Posterior vena cava (tissue), 2 donors: ENCODE measurements at regions of chr15 and their contacts with region 1.

Region 1: GRCh38 chr15:91852741-91853510 is 582 bp upstream of the SLCO3A1 start:
- DNase-seq: peak; percentile 96

Region 2: DNA sequence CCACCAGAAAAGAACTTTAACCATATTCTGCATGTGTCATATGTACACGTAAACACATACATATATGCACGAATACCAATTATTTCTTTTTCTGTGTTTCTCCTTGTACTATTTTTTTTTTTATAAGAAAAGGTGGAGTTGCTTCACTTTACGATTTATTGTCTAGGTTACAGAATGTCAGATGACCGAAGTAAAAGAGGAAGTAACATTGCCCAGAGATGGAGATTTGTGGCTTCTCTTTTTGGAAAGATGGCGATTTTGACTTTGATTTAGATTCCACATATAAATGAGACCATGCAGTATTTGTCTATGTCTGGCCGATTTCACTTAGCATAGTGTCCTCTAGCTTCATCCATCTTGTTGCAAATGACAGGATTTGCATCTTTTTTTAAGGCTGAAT is 459.7 kb before region 1 on chr15:
- intact Hi-C with region 1: loop called in 1 of 2 experiments (anchors 2 kb)
- DNase-seq: no peak

Region 3: DNA sequence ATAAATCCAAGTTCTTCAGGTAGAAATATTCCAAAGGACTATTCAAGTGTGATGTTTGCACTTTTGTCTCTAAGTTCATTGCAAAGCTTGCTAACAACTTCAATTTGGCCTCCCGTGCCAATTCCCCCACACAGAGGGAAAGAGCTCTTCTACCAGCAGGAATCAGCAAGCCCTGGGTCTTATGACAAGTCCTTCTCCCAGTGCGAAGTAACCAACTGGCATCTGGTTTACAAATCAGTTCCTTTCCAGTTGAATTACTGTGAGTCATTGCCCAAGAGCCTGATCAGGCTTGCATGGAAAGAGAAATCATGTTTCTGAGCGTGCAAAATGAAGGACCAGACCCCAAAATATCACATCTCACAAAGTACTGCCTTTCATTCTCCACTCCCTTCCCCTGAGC is 62.1 kb before region 1 on chr15:
- intact Hi-C with region 1: no loop called
- DNase-seq: no peak

Region 4: GRCh38 chr15:91890614-91891013 is 37.7 kb after region 1 on chr15:
- intact Hi-C with region 1: no loop called
- DNase-seq: no peak

Region 5: DNA sequence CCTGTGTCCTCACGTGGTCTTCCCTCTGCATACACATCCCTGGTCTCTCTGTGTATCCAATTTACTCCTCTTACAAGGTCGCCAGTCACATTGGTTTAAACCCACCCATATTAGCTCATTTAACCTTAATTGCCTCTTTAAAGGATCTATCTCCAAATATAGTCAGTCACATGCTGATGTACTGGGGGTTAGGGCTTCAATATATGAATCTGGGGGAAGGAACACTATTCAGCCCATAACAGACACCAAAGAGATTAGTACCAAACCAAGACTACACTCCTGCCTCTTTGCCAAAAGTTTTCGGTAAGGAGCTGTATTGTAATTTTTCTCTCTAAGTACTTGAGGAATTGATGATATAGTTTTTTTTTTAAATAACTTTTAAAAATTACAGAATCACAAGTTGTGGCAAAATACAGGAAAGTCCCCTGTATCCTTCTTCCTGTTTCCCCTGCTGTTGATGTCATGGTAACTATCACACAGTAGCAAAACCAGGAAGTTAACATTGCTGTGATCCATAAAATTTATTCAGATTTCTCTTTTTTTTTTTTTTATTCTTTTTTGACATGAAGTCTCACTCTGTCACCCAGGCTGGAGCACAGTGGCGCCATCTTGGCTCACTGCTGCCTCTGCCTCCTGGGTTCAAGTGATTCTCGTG is 68.4 kb after region 1 on chr15:
- intact Hi-C with region 1: loop called in 1 of 2 experiments (anchors 5 kb)
- DNase-seq: no peak

Region 6: GRCh38 chr15:91965501-91966184 is 112.7 kb after region 1 on chr15:
- intact Hi-C with region 1: no loop called
- DNase-seq: no peak